ENCODE measurements at regions of chr20 and their contacts with region 1.

Region 1: GRCh38 chr20:35791821-35792220 is 20.0 kb downstream of the PHF20 start:
- DNase-seq: peak; percentile 43
- H3K4me3 ChIP-seq: no peak overlapping the region
- H3K27ac ChIP-seq: no peak overlapping the region
- H3K4me1 ChIP-seq: no peaks in the 10 kb centered on the region
- H3K27me3 ChIP-seq: no peaks in the 10 kb centered on the region
- CTCF ChIP-seq: no peak

Region 2: GRCh38 chr20:35806075-35806474 is 14.3 kb after region 1 on chr20:
- CTCF ChIA-PET with region 1: no interaction called
- dilution Hi-C with region 1: no loop called
- in situ Hi-C with region 1: no loop called
- intact Hi-C with region 1: no loop called
- DNase-seq: no peak
- H3K4me3 ChIP-seq: no peak overlapping the region
- H3K27ac ChIP-seq: no peak overlapping the region
- H3K4me1 ChIP-seq: no peaks in the 10 kb centered on the region
- H3K27me3 ChIP-seq: no peaks in the 10 kb centered on the region
- CTCF ChIP-seq: no peak

Region 3: GRCh38 chr20:35854713-35855434 is 63.1 kb after region 1 on chr20:
- CTCF ChIA-PET with region 1: no interaction called
- dilution Hi-C with region 1: loop called (anchors 5 kb)
- in situ Hi-C with region 1: no loop called
- intact Hi-C with region 1: no loop called
- DNase-seq: no peak
- H3K4me3 ChIP-seq: no peak overlapping the region
- H3K27ac ChIP-seq: no peak overlapping the region
- H3K4me1 ChIP-seq: no peaks in the 10 kb centered on the region
- H3K27me3 ChIP-seq: no peaks in the 10 kb centered on the region
- CTCF ChIP-seq: no peak

Region 4: GRCh38 chr20:35942243-35942642 is 150.4 kb after region 1 on chr20:
- CTCF ChIA-PET with region 1: no interaction called
- dilution Hi-C with region 1: loop called (anchors 5 kb)
- in situ Hi-C with region 1: no loop called
- intact Hi-C with region 1: no loop called
- DNase-seq: no peak
- H3K4me3 ChIP-seq: no peak overlapping the region
- H3K27ac ChIP-seq: no peak overlapping the region
- H3K4me1 ChIP-seq: no peaks in the 10 kb centered on the region
- H3K27me3 ChIP-seq: no peaks in the 10 kb centered on the region
- CTCF ChIP-seq: no peak